Breast epithelium (tissue), 4 donors: ENCODE measurements at regions of chr21 and their contacts with region 1.

Region 1: DNA sequence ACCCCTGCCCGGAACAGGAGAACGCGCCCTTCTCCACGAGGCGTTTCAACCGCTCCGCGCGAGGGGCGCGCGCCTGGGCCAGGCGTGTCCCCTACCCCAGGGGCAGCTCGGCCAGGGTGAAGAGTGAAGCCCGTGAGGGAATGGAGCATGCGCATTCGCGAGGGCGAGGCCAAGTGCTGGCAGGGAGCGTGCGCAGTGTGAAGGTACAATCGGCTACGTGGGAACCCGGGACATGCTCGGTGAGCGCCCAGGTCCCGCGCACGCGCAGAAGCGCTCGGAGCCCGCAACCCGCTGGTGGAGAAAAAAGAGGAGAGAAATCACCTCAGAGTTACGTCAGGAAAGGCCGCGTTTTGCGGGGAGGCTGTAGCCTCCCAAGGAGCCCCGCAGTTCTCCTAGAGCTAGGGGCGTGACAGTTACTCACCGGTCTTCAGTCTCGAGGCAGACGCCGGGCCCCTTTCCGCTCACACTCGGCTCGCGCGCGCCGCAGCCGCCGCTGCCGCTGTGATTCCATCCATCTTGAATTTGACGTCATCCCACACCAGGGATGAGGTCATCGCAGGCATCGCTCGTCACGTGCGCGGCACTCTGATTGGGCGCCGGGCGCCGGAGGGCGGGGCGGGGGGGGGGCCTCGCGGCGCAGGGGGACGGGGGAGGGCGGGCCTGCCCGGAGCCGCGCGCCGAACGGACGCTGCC is at the start of gene ZBTB21:
- DNase-seq: peak; percentile 98
- H3K4me3 ChIP-seq: peak within 1 kb of the TSS; percentile 77 to 93 (median 84)
- H3K27ac ChIP-seq: peak within 1 kb of the TSS; percentile 97 to 99
- H3K4me1 ChIP-seq: no peaks in the 10 kb centered on the region
- H3K27me3 ChIP-seq: no peaks in the 10 kb centered on the region
- CTCF ChIP-seq: no peak
- POLR2A ChIP-seq: peak; percentile 61
- total RNA-seq, gene ZBTB21: 15.2 to 18.1 (median 16.1) TPM

Region 2: DNA sequence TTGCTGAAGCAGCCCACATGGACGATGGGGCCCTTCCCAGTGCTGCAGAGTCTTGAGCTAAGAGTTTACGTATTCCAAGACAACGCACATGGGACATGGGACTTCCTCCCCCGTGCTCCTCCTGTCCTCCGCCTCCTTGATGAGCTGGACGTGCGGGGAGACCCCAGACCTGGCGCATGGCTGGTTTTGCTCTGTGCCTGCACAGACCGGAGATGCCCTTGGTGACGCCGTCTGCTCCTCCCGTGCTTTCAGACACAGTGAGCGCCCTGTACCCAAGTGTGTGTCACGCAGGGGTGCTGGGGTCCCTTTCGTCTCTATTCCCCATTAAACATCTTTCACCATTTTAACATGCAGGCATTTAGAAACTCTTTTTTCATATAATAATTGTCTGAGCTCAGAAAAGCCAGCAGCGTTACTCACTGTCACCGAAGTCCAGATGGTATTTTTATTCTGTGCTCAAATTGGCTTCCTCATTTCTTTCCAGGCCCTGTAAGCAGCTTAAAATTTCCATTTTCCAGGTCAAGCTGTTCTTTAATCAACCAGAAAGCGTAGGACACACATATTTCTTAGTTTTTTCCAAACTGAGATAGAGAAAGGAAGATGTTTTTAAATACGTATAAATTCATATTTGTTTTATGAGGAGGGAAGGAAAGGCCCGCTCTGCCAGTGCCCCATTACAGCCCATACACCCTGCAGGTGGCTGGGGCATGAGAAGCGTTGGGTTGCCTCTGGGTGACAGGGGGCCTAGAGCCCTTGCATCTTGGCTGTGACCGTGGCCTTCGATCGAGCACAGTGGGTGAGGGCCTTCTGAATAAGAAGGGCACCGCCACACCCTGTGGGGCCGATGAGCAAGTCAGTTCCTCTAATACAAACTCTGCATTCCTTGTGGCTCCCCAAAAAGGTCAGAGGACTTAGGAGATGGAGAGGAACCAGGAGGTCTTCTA is 18.1 kb after region 1 on chr21:
- intact Hi-C with region 1: loop called (anchors 1 kb)
- DNase-seq: no peak
- H3K4me3 ChIP-seq: no peak overlapping the region
- H3K27ac ChIP-seq: no peak overlapping the region
- H3K4me1 ChIP-seq: peaks cover 0 to 3% of the 10 kb centered on the region in 2 donors
- H3K27me3 ChIP-seq: no peaks in the 10 kb centered on the region
- CTCF ChIP-seq: no peak
- POLR2A ChIP-seq: no peak

Region 3: DNA sequence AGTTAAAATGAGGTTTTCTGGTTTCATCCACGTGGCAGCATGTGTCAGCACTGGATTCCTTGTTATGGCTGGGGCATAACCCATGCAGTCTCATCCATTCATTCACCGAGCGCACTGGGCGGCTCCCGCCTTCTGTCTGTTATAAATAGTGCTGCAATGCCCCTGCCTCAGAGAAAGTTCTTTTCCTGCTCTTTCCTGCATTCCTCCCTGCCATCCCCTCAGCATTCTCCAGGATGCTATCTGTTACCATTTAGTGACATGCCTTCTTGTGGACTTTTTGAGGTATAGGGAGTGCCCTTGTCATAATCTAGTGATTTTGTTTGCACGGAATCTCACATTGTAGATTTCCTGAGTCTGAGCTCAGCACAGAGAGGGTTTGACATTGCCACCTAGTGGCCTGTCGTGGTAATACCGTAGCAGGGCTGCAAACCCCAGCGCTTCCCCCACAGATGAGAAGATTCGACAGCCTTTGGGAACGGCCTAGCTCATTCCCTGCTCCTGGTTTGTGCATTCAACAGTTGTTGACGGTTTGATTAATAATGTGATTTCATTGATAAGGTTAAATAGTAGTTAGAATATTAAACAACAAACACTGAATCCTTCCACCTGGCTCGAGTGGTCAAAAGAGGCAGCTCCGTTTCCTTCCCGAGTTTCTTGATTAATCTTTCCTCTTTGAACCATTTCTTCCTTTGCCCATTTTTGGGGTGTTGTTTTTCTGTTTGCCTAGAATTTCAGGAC is 107.4 kb after region 1 on chr21:
- intact Hi-C with region 1: loop called (anchors 10 kb)
- DNase-seq: peak; percentile 56 to 76
- H3K4me3 ChIP-seq: no peak overlapping the region
- H3K27ac ChIP-seq: no peak overlapping the region
- H3K4me1 ChIP-seq: peaks cover 4 to 16% of the 10 kb centered on the region in 2 donors
- H3K27me3 ChIP-seq: no peaks in the 10 kb centered on the region
- CTCF ChIP-seq: peak; percentile 90 to 97 (median 94)
- POLR2A ChIP-seq: no peak

Region 4: GRCh38 chr21:43687566-43688286 is 1677.7 kb after region 1 on chr21:
- intact Hi-C with region 1: no loop called
- DNase-seq: no peak
- H3K4me3 ChIP-seq: no peak overlapping the region
- H3K27ac ChIP-seq: no peak overlapping the region
- H3K4me1 ChIP-seq: no peaks in the 10 kb centered on the region
- H3K27me3 ChIP-seq: no peaks in the 10 kb centered on the region
- CTCF ChIP-seq: no peak
- POLR2A ChIP-seq: no peak